CD8-positive, alpha-beta T cell (primary cell): ENCODE measurements at regions of chr19 and their contacts with region 1.

Region 1: DNA sequence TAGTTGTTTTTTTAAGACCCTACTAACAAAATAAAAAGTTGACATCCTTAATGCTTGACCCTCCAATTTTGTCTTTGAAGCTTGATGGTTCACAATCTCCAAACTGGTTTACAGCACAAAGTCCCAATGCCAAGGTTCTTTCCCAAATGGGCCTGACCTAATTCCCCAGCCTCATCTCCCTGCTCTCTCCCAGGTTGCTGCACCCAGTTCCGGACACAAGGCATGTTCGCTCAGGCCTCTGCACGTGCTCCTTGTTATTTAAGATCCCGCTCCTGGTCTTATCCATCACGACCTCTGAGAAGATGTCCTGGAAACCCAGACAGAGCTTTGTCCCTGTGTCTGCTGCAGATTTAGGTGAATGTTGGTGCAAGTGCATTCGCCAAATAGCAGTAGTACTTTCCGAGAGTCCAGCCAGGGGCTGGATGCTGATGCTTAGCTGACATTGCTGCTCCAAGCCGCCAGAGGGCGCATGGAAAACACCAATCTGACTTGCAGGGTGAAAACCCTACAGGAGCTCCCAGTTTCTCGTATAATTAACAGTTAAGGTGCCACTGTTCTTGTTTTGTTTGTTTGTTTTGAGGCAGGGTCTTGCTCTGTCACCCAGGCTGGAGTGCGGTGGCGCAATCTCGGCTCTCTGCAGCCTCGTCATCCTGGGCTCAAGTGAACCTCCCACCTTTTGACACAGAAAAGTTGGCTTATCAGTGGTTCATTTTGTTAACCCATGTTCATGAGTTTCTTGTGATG is 18.5 kb downstream of the LYPD3 start:
- DNase-seq: peak; percentile 58 to 91 (median 82)
- ATAC-seq: peak; percentile 89
- H3K4me3 ChIP-seq: no peak overlapping the region
- H3K4me3 Mint-ChIP-seq: no peak overlapping the region
- H3K27ac ChIP-seq: no peak overlapping the region
- H3K27ac Mint-ChIP-seq: peak overlapping the region; percentile 87
- H3K4me1 ChIP-seq: peaks cover 5% of the 10 kb centered on the region
- H3K4me1 Mint-ChIP-seq: peaks cover 23% of the 10 kb centered on the region
- H3K27me3 ChIP-seq: no peaks in the 10 kb centered on the region
- H3K27me3 Mint-ChIP-seq: no peaks in the 10 kb centered on the region
- CTCF ChIP-seq: peak; percentile 97

Region 2: DNA sequence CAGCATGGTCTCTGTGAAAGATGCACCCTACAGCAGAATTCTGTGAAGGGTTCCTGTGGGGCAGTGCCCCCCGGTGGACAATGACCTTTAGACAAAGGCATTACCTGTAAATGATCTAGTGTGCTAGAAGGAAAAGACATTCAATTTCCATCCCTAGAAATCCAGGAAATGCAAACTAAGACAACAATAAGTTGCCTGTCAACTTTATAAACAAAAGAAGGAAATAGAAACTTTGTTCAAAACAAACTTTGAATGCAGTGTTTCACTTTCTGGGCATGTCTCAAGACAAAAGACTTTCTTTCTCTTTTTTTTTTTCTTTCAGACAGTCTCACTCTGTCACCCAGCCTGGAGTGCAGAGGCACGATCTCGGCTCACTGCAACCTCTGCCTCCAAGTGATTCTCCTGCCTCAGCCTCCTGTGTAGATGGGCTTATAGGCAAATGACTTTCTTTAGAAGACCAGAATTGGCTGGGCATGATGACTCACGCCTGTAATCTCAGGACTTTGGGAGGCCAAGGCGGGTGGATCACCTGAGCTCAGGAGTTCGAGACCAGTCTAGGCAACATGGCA is 16.7 kb before region 1 on chr19:
- CTCF ChIA-PET with region 1: interaction called, 135 read pairs
- POLR2A ChIA-PET with region 1: interaction called, 3 read pairs
- intact Hi-C with region 1: loop called (anchors 1 kb)
- DNase-seq: peak in 1 of 9 experiments; percentile 48
- ATAC-seq: no peak
- H3K4me3 ChIP-seq: no peak overlapping the region
- H3K4me3 Mint-ChIP-seq: no peak overlapping the region
- H3K27ac ChIP-seq: no peak overlapping the region
- H3K27ac Mint-ChIP-seq: no peak overlapping the region
- H3K4me1 ChIP-seq: peaks cover 7% of the 10 kb centered on the region
- H3K4me1 Mint-ChIP-seq: peaks cover 18% of the 10 kb centered on the region
- H3K27me3 ChIP-seq: no peaks in the 10 kb centered on the region
- H3K27me3 Mint-ChIP-seq: no peaks in the 10 kb centered on the region
- CTCF ChIP-seq: no peak

Region 3: DNA sequence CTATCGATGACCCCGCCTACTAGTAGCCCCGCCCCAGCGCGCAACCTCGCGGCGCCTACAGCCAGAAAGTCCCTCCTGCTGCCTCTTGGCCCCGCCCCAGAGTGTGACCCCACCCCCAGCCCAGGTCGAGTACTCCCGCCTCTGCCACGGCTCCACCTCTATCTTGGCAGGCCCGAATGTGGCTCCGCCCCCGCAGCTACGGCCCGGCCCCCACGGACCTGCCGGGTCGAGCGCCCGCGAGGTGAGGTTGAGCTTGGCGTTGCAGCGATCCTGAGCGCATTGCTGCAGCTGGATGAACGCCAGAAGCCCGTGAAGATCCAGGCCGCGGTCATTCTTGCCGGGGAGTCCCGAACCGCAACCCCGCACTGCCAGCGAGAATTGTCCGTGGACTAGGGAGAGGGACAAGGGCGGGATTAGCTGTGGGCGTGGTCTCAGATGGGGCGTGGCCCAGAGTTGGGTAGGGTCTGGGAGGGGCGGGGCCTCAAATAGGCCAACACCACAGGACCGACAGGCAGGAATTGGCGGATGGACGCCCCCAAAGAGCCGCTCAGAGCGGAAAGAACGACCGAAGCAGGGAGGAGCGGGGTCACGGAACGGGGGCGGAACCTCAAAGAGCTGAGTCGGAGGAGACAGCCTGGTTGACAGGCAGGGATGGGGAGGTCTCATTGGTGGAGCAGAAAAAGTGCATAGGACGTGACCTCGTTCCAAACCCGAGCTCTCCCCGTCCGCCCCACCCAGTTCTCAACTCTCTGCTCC is 16.6 kb after region 1 on chr19:
- CTCF ChIA-PET with region 1: interaction called, 40 read pairs
- POLR2A ChIA-PET with region 1: interaction called, 7 read pairs
- intact Hi-C with region 1: no loop called
- DNase-seq: peak; percentile 99 to 100 (median 99)
- ATAC-seq: peak; percentile 79
- H3K4me3 ChIP-seq: peak overlapping the region; percentile 75 to 89
- H3K4me3 Mint-ChIP-seq: peak overlapping the region; percentile 93
- H3K27ac ChIP-seq: peak overlapping the region; percentile 85 to 91
- H3K27ac Mint-ChIP-seq: peak overlapping the region; percentile 98
- H3K4me1 ChIP-seq: peaks cover 29% of the 10 kb centered on the region
- H3K4me1 Mint-ChIP-seq: peaks cover 53% of the 10 kb centered on the region
- H3K27me3 ChIP-seq: no peaks in the 10 kb centered on the region
- H3K27me3 Mint-ChIP-seq: no peaks in the 10 kb centered on the region
- CTCF ChIP-seq: no peak

Region 4: GRCh38 chr19:43498233-43498842 is 51.4 kb after region 1 on chr19:
- CTCF ChIA-PET with region 1: interaction called, 38 read pairs
- POLR2A ChIA-PET with region 1: interaction called, 5 read pairs
- intact Hi-C with region 1: no loop called
- DNase-seq: no peak
- ATAC-seq: no peak
- H3K4me3 ChIP-seq: no peak overlapping the region
- H3K4me3 Mint-ChIP-seq: no peak overlapping the region
- H3K27ac ChIP-seq: no peak overlapping the region
- H3K27ac Mint-ChIP-seq: peak overlapping the region; percentile 75
- H3K4me1 ChIP-seq: peaks cover 10% of the 10 kb centered on the region
- H3K4me1 Mint-ChIP-seq: peaks cover 24% of the 10 kb centered on the region
- H3K27me3 ChIP-seq: no peaks in the 10 kb centered on the region
- H3K27me3 Mint-ChIP-seq: no peaks in the 10 kb centered on the region
- CTCF ChIP-seq: no peak

Region 5: DNA sequence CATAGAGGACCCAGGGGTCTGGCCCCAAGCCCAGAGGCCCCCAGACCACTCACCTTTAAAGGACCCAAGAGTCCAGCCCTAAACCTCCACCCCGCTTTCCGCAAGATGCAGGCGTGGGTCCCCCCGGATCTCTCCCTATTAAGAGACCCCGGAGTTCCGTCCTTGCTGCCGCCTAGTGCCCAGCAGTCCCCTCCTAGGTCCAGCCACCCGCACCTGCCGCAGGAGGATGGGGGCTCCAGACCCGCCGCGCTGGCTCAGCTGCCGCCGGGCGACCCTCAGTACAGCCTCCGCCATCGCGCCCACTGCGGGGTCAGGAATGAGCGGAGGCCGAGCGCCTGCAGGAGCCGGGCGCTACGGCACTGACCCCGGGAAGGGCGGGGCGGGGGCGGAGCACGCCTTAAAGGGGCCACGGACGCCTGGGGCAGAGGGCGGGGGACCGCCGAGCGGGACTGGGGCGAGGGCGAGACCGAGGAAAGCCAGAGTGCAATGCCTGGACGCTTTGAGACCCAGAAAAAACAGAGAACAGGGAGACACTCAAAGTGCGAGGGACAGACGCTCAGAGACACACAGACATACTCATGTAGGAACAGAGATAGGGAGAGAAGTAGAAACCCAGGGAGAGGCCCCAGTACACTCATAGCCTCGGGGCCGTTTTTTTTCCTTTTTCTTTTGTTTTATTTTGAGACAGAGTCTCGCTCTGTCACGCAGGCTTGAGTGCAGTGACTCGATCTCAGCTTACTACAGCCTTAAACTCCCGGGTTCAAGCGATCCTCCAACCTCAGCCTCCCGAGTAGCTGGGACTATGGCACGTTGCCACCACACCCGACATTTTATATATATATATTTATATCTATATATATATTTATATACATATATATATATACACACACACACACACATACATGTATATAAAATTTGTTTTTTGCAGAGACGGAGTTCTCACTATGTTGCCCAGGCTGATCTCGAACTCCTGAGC is 80.3 kb after region 1 on chr19 and contains the start of gene ETHE1:
- CTCF ChIA-PET with region 1: interaction called, 369 read pairs
- POLR2A ChIA-PET with region 1: interaction called, 5 read pairs
- intact Hi-C with region 1: no loop called
- DNase-seq: peak in 8 of 9 experiments; percentile 57 to 81 (median 72)
- ATAC-seq: peak; percentile 76
- H3K4me3 ChIP-seq: peak within 1 kb of the TSS; percentile 88 to 93
- H3K4me3 Mint-ChIP-seq: peak within 1 kb of the TSS; percentile 94
- H3K27ac ChIP-seq: peak within 1 kb of the TSS; percentile 55 to 65
- H3K27ac Mint-ChIP-seq: peak within 1 kb of the TSS; percentile 73
- H3K4me1 ChIP-seq: peaks cover 16% of the 10 kb centered on the region
- H3K4me1 Mint-ChIP-seq: peaks cover 26% of the 10 kb centered on the region
- H3K27me3 ChIP-seq: no peaks in the 10 kb centered on the region
- H3K27me3 Mint-ChIP-seq: no peaks in the 10 kb centered on the region
- CTCF ChIP-seq: no peak
- total RNA-seq, gene ETHE1: 17.2 to 17.6 TPM

Region 6: DNA sequence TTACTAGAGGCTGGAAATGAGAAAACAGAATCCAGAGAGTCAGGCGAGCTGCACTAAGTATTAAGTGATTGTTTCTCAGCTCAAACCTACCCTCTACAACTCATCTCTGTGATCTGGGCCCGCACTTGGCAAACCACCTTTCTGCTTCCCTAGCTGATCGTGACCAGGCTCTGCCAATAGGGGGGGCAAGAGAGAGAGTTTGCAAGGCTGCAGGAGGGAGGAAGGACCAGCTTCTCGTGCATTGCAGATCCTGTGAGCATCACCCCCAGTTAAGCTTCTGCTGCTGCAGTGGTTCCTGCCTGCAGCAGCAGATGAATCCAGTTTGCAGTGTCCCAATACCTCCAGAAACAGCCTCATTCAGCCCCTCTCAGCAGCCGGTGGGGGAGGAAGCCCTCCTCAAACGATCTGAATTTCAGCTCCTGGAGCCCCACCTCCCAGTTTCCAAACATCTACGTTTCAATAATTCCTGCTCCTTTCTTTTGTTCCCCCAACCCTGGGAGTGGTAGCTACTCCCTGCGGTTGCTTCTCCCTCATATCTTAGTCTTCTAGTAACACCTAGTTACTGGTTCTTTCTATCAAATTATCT is 108.4 kb after region 1 on chr19:
- CTCF ChIA-PET with region 1: interaction called, 33 read pairs
- POLR2A ChIA-PET with region 1: no interaction called
- intact Hi-C with region 1: no loop called
- DNase-seq: peak; percentile 71 to 90 (median 86)
- ATAC-seq: peak; percentile 100
- H3K4me3 ChIP-seq: no peak overlapping the region
- H3K4me3 Mint-ChIP-seq: no peak overlapping the region
- H3K27ac ChIP-seq: no peak overlapping the region
- H3K27ac Mint-ChIP-seq: no peak overlapping the region
- H3K4me1 ChIP-seq: peaks cover 7% of the 10 kb centered on the region
- H3K4me1 Mint-ChIP-seq: peaks cover 17% of the 10 kb centered on the region
- H3K27me3 ChIP-seq: no peaks in the 10 kb centered on the region
- H3K27me3 Mint-ChIP-seq: no peaks in the 10 kb centered on the region
- CTCF ChIP-seq: peak; percentile 79

Region 7: DNA sequence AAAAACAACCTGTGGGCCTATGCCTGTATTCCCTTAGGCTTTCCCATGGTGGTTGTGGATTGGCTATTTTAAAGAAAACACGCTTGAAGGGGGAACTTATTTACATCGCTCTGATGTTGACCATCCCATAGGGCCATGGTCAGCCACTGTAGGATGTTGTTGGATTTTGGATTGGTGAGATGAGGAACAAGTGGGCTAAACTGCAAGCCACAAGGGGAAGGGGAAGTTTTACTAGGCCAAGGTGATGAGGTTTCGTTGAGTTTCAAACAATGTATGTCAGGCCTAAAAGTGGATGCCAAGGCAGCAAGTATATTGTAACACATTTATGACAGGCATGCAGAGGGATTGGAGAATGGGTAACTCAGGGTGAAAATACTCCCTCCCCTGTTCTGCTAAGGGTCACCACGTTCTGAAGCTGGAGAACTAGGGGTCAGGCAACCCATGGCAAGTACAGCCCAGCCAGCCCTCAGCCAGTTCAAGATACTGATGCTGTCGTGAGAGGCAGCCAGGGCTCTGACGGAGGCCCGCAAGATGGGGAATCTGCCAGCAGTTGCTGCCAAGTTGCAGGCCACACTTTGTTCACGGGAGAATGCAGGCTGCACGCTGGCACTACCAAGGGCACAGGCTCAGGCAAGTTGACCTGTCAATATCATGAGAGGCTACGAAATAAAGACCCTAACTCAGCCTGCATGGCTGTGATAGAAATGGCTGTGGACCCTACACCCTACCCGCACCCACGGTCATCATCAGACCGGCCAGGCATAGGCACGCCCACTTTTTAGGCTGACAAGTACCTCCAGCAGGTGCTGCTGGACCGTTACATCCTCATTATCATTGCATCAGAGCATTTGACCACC is 280.0 kb after region 1 on chr19:
- CTCF ChIA-PET with region 1: no interaction called
- POLR2A ChIA-PET with region 1: no interaction called
- intact Hi-C with region 1: no loop called
- DNase-seq: no peak
- ATAC-seq: no peak
- H3K4me3 ChIP-seq: no peak overlapping the region
- H3K4me3 Mint-ChIP-seq: no peak overlapping the region
- H3K27ac ChIP-seq: no peak overlapping the region
- H3K27ac Mint-ChIP-seq: no peak overlapping the region
- H3K4me1 ChIP-seq: peaks cover 4% of the 10 kb centered on the region
- H3K4me1 Mint-ChIP-seq: peaks cover 4% of the 10 kb centered on the region
- H3K27me3 ChIP-seq: no peaks in the 10 kb centered on the region
- H3K27me3 Mint-ChIP-seq: no peaks in the 10 kb centered on the region
- CTCF ChIP-seq: no peak